HCT116 (cell line): ENCODE measurements at regions of chr5 and their contacts with region 1.

Region 1: DNA sequence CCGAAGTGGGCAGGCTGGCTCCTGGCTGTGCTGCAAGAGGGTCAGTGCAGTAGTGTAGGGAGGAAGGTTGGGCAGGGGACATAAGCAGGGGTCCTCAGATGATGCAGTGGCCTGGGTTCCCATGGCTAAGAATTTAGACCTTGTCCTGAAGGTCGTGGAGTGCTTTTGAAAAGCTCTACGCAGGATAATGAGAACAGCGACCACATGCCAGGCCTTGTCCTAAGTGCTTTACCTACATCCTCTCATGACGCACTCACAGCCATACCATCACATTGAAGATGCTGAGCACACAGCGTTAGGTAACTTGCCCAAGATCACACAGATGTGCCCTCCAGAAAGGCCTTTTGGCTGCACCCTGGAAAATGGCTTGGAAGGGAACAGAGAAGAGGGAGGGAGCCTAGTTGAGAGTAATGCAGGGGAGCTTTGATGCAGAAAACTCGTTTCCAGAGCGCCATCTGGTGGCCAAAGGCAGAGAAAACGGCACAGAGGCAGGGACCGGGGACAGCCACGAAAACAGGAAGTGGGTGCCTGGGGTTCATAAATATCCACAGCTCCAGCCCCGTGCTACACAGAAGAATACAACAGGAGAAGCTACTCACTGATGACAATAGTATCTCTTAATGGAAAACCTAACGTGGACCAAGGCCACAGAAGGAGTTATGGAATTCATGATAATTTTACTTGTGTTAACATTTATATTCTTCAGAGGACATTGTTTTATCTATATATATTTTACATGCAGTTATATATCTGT is 2.6 kb upstream of the PCDH12 start:
- DNase-seq: peak; percentile 72
- ATAC-seq: peak; percentile 96
- H3K4me3 ChIP-seq: no peak overlapping the region
- H3K27ac ChIP-seq: no peak overlapping the region
- H3K4me1 ChIP-seq: peaks cover 0 to 10% of the 10 kb centered on the region in 2 experiments; a peak in 1 of 4 replicates
- H3K27me3 ChIP-seq: no peaks in the 10 kb centered on the region
- CTCF ChIP-seq: peak; percentile 87 to 96 (median 89)
- POLR2A ChIP-seq: no peak
- RAD21 ChIP-seq: peak; percentile 97

Region 2: GRCh38 chr5:141691867-141692532 is 268.6 kb before region 1 on chr5:
- CTCF ChIA-PET with region 1: interaction called, 79 read pairs
- POLR2A ChIA-PET with region 1: interaction called, 5 read pairs
- RAD21 ChIA-PET with region 1: interaction called, 13 to 19 read pairs
- intact Hi-C with region 1: loop called (anchors 1 kb)
- DNase-seq: peak; percentile 51
- ATAC-seq: peak; percentile 98
- H3K4me3 ChIP-seq: peak overlapping the region in 1 of 2 experiments; percentile 33; a peak in 1 of 4 replicates
- H3K27ac ChIP-seq: no peak overlapping the region
- H3K4me1 ChIP-seq: peaks cover 0 to 18% of the 10 kb centered on the region in 2 experiments; a peak in 3 of 4 replicates
- H3K27me3 ChIP-seq: no peaks in the 10 kb centered on the region
- CTCF ChIP-seq: peak; percentile 90 to 98 (median 92)
- POLR2A ChIP-seq: no peak
- RAD21 ChIP-seq: peak; percentile 100

Region 3: DNA sequence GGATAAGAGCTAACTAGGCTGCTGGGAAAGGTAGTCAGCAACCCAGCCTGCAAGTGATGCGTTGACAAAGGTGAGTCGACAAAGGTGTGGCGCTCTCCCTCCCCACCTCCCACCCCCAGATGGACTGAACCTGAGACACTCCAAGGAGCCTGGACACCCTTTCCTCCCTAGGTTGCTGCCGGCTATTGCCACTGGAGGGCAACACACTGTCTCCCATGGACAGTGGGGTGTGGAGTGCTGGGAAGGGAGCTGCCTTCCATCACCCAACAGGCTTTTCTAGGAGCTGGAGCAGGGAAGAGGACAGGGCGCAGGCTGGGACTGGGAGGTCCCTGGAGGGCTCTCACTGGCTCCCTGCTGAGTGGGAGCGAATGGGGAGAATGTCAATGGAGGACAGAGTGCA is 203.2 kb before region 1 on chr5:
- CTCF ChIA-PET with region 1: interaction called, 13 read pairs
- POLR2A ChIA-PET with region 1: no interaction called
- RAD21 ChIA-PET with region 1: interaction called in 1 of 2 experiments, 3 read pairs
- intact Hi-C with region 1: no loop called
- DNase-seq: peak; percentile 34
- ATAC-seq: peak; percentile 93
- H3K4me3 ChIP-seq: no peak overlapping the region
- H3K27ac ChIP-seq: no peak overlapping the region
- H3K4me1 ChIP-seq: peaks cover 0 to 9% of the 10 kb centered on the region in 2 experiments; a peak in 1 of 4 replicates
- H3K27me3 ChIP-seq: peaks cover 3% of the 10 kb centered on the region; the same call in 1 of the 2 replicates
- CTCF ChIP-seq: peak; percentile 61 to 75 (median 71)
- POLR2A ChIP-seq: no peak
- RAD21 ChIP-seq: peak; percentile 85

Region 4: GRCh38 chr5:141923448-141924352 is 36.9 kb before region 1 on chr5 and contains the start of gene DELE1:
- CTCF ChIA-PET with region 1: interaction called, 17 read pairs
- POLR2A ChIA-PET with region 1: interaction called, 3 read pairs
- RAD21 ChIA-PET with region 1: interaction called in 1 of 2 experiments, 3 read pairs
- intact Hi-C with region 1: no loop called
- DNase-seq: peak; percentile 89
- ATAC-seq: peak; percentile 94
- H3K4me3 ChIP-seq: peak within 1 kb of the TSS; percentile 93 to 97
- H3K27ac ChIP-seq: peak within 1 kb of the TSS; percentile 95
- H3K4me1 ChIP-seq: peaks cover 4 to 13% of the 10 kb centered on the region in 2 experiments; a peak in 3 of 4 replicates
- H3K27me3 ChIP-seq: no peaks in the 10 kb centered on the region
- CTCF ChIP-seq: no peak
- POLR2A ChIP-seq: peak; percentile 88
- RAD21 ChIP-seq: no peak
- total RNA-seq, gene DELE1: 74.1 TPM

Region 5: GRCh38 chr5:142087920-142088679 is 127.5 kb after region 1 on chr5:
- CTCF ChIA-PET with region 1: no interaction called
- POLR2A ChIA-PET with region 1: no interaction called
- RAD21 ChIA-PET with region 1: no interaction called
- intact Hi-C with region 1: no loop called
- DNase-seq: no peak
- ATAC-seq: no peak
- H3K4me3 ChIP-seq: no peak overlapping the region
- H3K27ac ChIP-seq: no peak overlapping the region
- H3K4me1 ChIP-seq: peaks cover 3 to 11% of the 10 kb centered on the region in 2 experiments; a peak in 3 of 4 replicates
- H3K27me3 ChIP-seq: no peaks in the 10 kb centered on the region
- CTCF ChIP-seq: no peak
- POLR2A ChIP-seq: no peak
- RAD21 ChIP-seq: no peak